Caco-2 (cell line): ENCODE measurements at regions of chr2 and their contacts with region 1.

Region 1: DNA sequence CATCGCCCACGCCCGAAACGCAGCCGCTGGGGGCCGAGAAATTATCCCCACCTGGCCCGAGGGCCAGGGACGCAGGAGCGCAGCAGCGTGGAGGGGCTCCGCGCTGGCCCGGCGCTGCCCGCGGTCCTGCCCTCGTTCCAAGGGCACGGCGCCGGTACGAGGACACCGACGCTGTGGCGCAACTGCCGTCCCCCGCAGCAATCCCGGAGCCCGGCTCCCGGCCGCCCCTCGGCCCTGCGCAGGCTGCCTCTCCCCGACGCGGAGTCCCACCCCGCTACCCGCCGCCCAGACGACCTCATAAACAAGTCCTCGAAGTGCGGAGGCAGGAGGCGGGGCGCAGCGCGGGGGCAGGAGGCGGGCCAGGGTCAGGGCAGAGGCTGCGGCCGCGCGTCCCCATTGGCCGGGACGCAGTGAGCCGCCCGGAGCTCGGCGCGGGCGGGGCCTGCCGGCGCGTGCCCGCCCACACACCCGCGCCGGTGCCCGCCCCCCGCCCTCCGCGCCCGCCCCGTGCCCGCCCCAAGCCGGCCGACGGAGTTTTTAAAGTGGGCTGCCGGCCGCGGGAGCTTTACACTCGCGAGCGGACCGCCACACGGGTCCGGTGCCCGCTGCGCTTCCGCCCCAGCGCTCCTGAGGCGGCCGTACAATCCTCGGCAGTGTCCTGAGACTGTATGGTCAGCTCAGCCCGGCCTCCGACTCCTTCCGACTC is at the start of gene EPAS1:
- DNase-seq: peak; percentile 91 to 92
- H3K4me3 ChIP-seq: peak within 1 kb of the TSS; percentile 90
- H3K4me3 Mint-ChIP-seq: peak within 1 kb of the TSS; percentile 83
- H3K27ac Mint-ChIP-seq: peak within 1 kb of the TSS; percentile 57
- H3K4me1 ChIP-seq: peaks cover 16% of the 10 kb centered on the region
- H3K4me1 Mint-ChIP-seq: peaks cover 17% of the 10 kb centered on the region
- H3K27me3 ChIP-seq: no peaks in the 10 kb centered on the region
- H3K27me3 Mint-ChIP-seq: peaks cover 2% of the 10 kb centered on the region
- CTCF ChIP-seq: no peak
- total RNA-seq, gene EPAS1: 68.1 and 77.3 TPM in 2 replicates

Region 2: GRCh38 chr2:44897406-44897805 is 1399.6 kb before region 1 on chr2:
- CTCF ChIA-PET with region 1: no interaction called
- POLR2A ChIA-PET with region 1: no interaction called
- intact Hi-C with region 1: no loop called
- DNase-seq: no peak
- H3K4me3 ChIP-seq: no peak overlapping the region
- H3K4me3 Mint-ChIP-seq: no peak overlapping the region
- H3K27ac Mint-ChIP-seq: no peak overlapping the region
- H3K4me1 ChIP-seq: no peaks in the 10 kb centered on the region
- H3K4me1 Mint-ChIP-seq: peaks cover 4% of the 10 kb centered on the region
- H3K27me3 ChIP-seq: no peaks in the 10 kb centered on the region
- H3K27me3 Mint-ChIP-seq: peaks cover 6% of the 10 kb centered on the region
- CTCF ChIP-seq: peak in 1 of 2 experiments; percentile 25

Region 3: DNA sequence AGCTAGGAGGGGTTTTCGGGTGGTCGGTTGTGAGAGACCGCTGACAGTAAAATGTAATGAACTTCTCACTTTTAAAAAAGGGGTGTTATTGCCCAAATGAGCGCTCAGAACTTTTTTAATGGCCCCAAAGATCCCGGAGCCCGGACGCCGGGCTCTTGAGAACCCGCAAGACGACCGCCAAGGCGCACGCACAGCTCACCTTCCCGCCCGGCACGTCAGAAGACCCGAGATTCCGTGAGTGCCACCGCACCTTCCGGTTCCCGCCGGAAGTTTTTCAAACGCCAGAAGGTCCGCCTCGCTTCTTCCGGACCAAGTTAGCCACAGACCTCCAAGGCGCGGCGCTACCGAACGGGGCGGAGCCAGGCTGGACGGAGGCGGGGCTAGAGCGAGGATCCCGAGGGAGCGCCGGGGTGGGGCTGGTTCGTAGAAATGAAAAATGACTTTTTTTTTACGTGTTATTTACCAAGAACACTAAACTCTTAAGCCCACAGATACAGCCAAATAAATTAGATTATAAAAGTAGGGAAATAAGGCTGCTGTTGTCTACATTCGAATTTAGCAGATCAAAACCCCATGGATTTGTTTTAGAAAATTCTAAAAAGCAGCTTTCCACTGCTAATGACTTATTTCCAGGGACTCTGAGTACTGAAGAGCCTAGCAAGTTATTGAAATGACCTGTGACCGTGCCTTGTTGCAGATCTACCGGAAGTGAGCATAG is 685.8 kb before region 1 on chr2 and contains the start of gene SRBD1:
- CTCF ChIA-PET with region 1: no interaction called
- POLR2A ChIA-PET with region 1: no interaction called
- intact Hi-C with region 1: loop called (anchors 10 kb)
- DNase-seq: peak; percentile 97 to 98
- H3K4me3 ChIP-seq: peak within 1 kb of the TSS; percentile 68
- H3K4me3 Mint-ChIP-seq: peak within 1 kb of the TSS; percentile 95
- H3K27ac Mint-ChIP-seq: peak within 1 kb of the TSS; percentile 97
- H3K4me1 ChIP-seq: peaks cover 26% of the 10 kb centered on the region
- H3K4me1 Mint-ChIP-seq: peaks cover 47% of the 10 kb centered on the region
- H3K27me3 ChIP-seq: no peaks in the 10 kb centered on the region
- H3K27me3 Mint-ChIP-seq: no peaks in the 10 kb centered on the region
- CTCF ChIP-seq: no peak
- total RNA-seq, gene SRBD1: 15.8 and 16.6 TPM in 2 replicates

Region 4: DNA sequence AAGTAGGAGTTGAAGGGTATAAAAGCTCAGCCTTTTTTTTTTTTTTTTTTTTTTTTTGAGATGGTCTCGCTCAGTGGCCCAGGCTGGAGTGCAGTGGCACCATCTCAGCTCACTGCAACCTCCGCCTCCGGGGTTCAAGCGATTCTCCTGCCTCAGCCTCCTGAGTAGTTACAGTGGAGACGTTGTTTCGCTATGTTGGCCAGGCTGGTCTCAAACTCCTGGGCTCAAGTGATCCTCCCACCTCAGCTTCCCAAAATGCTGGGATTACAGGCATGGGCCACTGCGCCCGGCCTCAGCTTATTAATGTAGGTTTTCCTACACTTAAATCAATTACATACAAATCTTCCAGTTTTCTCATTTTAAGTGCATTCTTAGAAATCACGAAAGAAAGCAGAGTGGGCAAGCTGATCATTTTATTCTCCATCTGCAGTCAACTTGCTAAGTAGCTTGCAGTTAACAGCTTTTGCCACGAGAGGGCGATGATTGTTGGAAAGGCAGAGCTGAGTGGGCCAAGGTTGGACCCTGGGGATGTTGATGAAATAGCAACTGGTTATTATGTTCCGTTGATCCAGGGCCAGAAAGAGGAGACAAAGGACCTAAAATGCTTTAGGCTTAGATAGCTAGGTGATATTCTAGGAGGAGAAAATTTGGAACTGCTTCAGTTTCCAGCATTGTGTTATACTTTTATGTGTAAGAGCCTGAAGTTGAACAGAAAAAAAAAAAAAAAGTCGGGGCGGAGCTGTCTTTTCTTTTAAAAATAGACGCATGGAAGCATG is 234.2 kb before region 1 on chr2:
- CTCF ChIA-PET with region 1: interaction called, 29 read pairs
- POLR2A ChIA-PET with region 1: interaction called, 6 read pairs
- intact Hi-C with region 1: loop called (anchors 1 kb)
- DNase-seq: peak; percentile 75 to 86
- H3K4me3 ChIP-seq: no peak overlapping the region
- H3K4me3 Mint-ChIP-seq: no peak overlapping the region
- H3K27ac Mint-ChIP-seq: no peak overlapping the region
- H3K4me1 ChIP-seq: peaks cover 21% of the 10 kb centered on the region
- H3K4me1 Mint-ChIP-seq: peaks cover 37% of the 10 kb centered on the region
- H3K27me3 ChIP-seq: no peaks in the 10 kb centered on the region
- H3K27me3 Mint-ChIP-seq: no peaks in the 10 kb centered on the region
- CTCF ChIP-seq: peak; percentile 84 to 91

Region 5: DNA sequence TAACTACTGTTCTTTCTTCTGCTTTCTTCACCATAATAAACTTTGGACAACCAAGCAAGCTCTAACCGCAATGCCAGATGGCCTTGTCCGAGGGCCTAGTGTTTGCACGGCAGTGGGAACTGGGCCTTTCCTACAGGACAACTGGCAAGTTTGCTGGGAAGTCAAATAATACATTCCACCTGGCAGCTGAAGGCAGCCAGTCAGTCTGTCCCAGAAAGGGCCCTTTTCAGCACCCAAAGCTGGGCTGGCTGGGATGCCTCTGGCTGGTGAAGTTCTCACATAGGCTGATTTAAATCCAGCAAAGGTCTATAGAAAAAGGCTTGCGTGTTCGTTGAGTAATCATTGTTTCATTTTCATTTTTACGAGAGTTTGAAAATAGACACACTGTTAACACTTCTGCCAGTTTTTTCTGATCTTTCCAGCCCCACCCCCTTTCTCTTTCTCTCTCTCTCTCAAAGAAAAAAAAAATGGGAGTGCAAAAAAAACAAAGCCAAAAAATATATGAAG is 109.8 kb before region 1 on chr2:
- CTCF ChIA-PET with region 1: no interaction called
- POLR2A ChIA-PET with region 1: no interaction called
- intact Hi-C with region 1: no loop called
- DNase-seq: no peak
- H3K4me3 ChIP-seq: no peak overlapping the region
- H3K4me3 Mint-ChIP-seq: no peak overlapping the region
- H3K27ac Mint-ChIP-seq: no peak overlapping the region
- H3K4me1 ChIP-seq: no peaks in the 10 kb centered on the region
- H3K4me1 Mint-ChIP-seq: no peaks in the 10 kb centered on the region
- H3K27me3 ChIP-seq: no peaks in the 10 kb centered on the region
- H3K27me3 Mint-ChIP-seq: no peaks in the 10 kb centered on the region
- CTCF ChIP-seq: no peak

Region 6: DNA sequence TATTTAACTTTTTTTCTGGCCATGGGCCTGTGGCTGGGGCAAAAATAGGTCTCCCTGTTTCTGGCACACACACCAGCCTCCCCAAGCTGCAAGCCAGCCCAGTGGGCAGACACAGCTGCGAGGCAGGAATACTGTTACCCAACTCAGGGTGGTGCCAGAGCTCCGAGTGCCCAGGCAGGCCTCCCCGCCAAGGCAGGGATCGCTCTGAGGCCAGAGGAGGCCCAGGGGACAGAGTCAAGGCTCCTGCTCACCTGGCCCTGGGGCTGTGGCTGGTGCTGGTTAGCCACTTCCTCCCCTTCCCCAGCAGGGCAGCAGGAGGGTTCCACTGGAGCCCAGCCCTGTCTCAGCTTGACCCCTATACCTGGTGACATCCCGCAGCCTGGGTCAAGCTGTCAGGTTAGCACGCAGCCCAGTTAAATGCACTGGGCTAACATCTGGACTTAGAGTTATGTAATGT is 66.8 kb before region 1 on chr2:
- CTCF ChIA-PET with region 1: interaction called, 12 read pairs
- POLR2A ChIA-PET with region 1: no interaction called
- intact Hi-C with region 1: loop called (anchors 5 kb)
- DNase-seq: no peak
- H3K4me3 ChIP-seq: no peak overlapping the region
- H3K4me3 Mint-ChIP-seq: no peak overlapping the region
- H3K27ac Mint-ChIP-seq: peak overlapping the region; percentile 32
- H3K4me1 ChIP-seq: peaks cover 3% of the 10 kb centered on the region
- H3K4me1 Mint-ChIP-seq: peaks cover 16% of the 10 kb centered on the region
- H3K27me3 ChIP-seq: no peaks in the 10 kb centered on the region
- H3K27me3 Mint-ChIP-seq: peaks cover 3% of the 10 kb centered on the region
- CTCF ChIP-seq: no peak

Region 7: GRCh38 chr2:46335391-46336282 is 38.6 kb after region 1 on chr2:
- CTCF ChIA-PET with region 1: interaction called, 4 read pairs
- POLR2A ChIA-PET with region 1: interaction called, 8 read pairs
- intact Hi-C with region 1: loop called (anchors 1 kb)
- DNase-seq: peak; percentile 67 to 75
- H3K4me3 ChIP-seq: peak overlapping the region; percentile 34
- H3K4me3 Mint-ChIP-seq: peak overlapping the region; percentile 83
- H3K27ac Mint-ChIP-seq: peak overlapping the region; percentile 77
- H3K4me1 ChIP-seq: peaks cover 52% of the 10 kb centered on the region
- H3K4me1 Mint-ChIP-seq: peaks cover 66% of the 10 kb centered on the region
- H3K27me3 ChIP-seq: no peaks in the 10 kb centered on the region
- H3K27me3 Mint-ChIP-seq: no peaks in the 10 kb centered on the region
- CTCF ChIP-seq: no peak

Region 8: GRCh38 chr2:46409753-46410152 is 112.8 kb after region 1 on chr2:
- CTCF ChIA-PET with region 1: interaction called, 6 read pairs
- POLR2A ChIA-PET with region 1: no interaction called
- intact Hi-C with region 1: loop called (anchors 1 kb)
- DNase-seq: no peak
- H3K4me3 ChIP-seq: no peak overlapping the region
- H3K4me3 Mint-ChIP-seq: peak overlapping the region; percentile 50
- H3K27ac Mint-ChIP-seq: peak overlapping the region; percentile 88
- H3K4me1 ChIP-seq: peaks cover 27% of the 10 kb centered on the region
- H3K4me1 Mint-ChIP-seq: peaks cover 27% of the 10 kb centered on the region
- H3K27me3 ChIP-seq: no peaks in the 10 kb centered on the region
- H3K27me3 Mint-ChIP-seq: no peaks in the 10 kb centered on the region
- CTCF ChIP-seq: no peak

Region 9: DNA sequence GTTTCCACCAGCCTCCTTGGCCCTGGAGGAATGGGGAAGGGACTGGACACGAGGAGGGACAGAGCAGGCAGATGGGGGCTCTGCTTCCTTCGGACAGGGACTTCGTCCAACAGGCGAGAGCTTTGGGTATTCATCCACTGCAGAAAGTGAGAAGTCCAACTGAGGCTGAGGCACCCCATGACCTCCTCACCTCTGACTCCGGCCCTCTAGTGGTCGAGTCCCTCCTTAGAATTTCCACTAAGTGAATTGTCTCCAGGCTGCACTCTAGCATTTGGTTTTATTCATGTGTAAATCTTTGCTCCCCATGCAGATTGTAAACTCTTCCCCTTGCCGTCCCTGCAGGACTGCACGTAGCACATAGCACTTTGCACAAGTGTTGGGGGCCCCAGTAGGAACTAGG is 258.0 kb after region 1 on chr2:
- CTCF ChIA-PET with region 1: no interaction called
- POLR2A ChIA-PET with region 1: no interaction called
- intact Hi-C with region 1: no loop called
- DNase-seq: peak in 1 of 2 experiments; percentile 32
- H3K4me3 ChIP-seq: no peak overlapping the region
- H3K4me3 Mint-ChIP-seq: no peak overlapping the region
- H3K27ac Mint-ChIP-seq: no peak overlapping the region
- H3K4me1 ChIP-seq: peaks cover 10% of the 10 kb centered on the region; the same call in 1 of the 2 replicates
- H3K4me1 Mint-ChIP-seq: peaks cover 10% of the 10 kb centered on the region
- H3K27me3 ChIP-seq: no peaks in the 10 kb centered on the region
- H3K27me3 Mint-ChIP-seq: no peaks in the 10 kb centered on the region
- CTCF ChIP-seq: peak; percentile 63 to 64